ENCODE measurements at regions of chr13 and their contacts with region 1.

Region 1: DNA sequence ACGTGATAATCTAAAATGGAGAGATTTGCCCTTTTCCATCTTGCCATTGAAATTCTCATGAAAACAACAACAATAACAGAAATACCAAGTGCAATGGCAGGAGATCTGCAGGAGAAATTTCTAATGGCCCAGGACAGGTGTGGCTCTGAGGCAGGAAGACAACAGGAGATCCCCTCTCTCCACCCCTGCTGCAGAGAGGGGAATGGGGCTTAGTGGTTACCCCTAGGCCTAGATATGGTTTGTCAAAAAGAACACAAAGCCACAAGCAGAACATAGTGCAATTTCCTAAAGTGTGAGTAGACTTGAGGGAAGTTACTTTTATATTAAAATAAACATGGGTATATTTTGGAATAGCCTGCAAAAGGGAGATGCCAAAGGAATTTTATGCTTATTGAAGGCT is 369.5 kb downstream of the KCNRG start:
- DNase-seq: no peak
- H3K4me3 ChIP-seq: no peak overlapping the region
- CTCF ChIP-seq: no peak
- POLR2A ChIP-seq: no peak

Region 2: DNA sequence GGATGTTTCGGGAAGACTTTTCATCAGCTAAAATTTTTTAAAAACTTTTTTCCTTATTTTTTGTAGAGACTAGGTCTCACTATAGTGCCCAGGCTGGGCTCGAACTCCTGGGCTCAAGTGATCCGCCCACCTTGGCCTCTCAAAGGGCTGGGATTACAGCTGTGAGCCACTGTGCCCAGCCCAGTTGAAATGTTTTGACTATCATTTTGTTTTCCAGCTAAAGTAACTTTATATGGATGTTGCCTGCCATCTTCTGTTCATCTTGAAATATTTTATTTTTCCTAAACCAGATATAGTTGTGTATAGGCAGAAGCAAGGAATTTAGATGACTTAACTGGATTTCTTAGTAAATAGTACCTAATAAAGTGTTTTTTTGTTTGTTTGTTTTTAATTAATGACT is 947.8 kb before region 1 on chr13:
- intact Hi-C with region 1: loop called (anchors 5 kb)
- DNase-seq: peak in 1 of 2 donors; percentile 30
- H3K4me3 ChIP-seq: no peak overlapping the region
- CTCF ChIP-seq: no peak
- POLR2A ChIP-seq: no peak

Region 3: DNA sequence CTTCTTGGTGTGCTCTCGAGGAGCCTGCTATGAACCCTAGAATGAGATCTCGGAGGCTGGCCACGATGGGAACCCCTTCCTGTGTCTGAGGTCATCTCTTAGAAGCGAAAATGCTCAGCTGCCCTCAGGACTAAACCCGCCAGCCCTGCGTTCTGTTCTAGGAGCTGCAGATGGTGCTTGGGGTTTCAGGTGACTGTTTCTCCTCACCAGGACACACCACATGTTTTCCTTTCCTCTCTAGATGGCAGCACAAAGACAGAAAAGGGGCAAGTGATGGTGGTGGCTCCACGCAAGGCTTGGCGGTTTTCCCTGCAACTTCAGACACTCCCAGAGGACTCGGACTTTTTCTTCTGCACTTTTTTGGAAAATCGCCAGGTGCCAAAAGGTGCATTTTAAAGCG is 585.0 kb after region 1 on chr13:
- intact Hi-C with region 1: no loop called
- DNase-seq: no peak
- H3K4me3 ChIP-seq: no peak overlapping the region
- CTCF ChIP-seq: no peak
- POLR2A ChIP-seq: no peak

Measured in lower leg skin (tissue), 4 donors.